ENCODE measurements at regions of chr11 and their contacts with region 1.

Region 1: GRCh38 chr11:95108159-95108611 is 18.5 kb downstream of the ENDOD1 start:
- DNase-seq: no peak
- ATAC-seq: no peak
- H3K4me3 ChIP-seq: no peak overlapping the region
- H3K4me3 Mint-ChIP-seq: no peak overlapping the region
- H3K27ac ChIP-seq: no peak overlapping the region
- H3K27ac Mint-ChIP-seq: no peak overlapping the region
- H3K4me1 ChIP-seq: no peaks in the 10 kb centered on the region
- H3K4me1 Mint-ChIP-seq: peaks cover 6% of the 10 kb centered on the region
- H3K27me3 ChIP-seq: no peaks in the 10 kb centered on the region
- H3K27me3 Mint-ChIP-seq: no peaks in the 10 kb centered on the region
- CTCF ChIP-seq: no peak

Region 2: DNA sequence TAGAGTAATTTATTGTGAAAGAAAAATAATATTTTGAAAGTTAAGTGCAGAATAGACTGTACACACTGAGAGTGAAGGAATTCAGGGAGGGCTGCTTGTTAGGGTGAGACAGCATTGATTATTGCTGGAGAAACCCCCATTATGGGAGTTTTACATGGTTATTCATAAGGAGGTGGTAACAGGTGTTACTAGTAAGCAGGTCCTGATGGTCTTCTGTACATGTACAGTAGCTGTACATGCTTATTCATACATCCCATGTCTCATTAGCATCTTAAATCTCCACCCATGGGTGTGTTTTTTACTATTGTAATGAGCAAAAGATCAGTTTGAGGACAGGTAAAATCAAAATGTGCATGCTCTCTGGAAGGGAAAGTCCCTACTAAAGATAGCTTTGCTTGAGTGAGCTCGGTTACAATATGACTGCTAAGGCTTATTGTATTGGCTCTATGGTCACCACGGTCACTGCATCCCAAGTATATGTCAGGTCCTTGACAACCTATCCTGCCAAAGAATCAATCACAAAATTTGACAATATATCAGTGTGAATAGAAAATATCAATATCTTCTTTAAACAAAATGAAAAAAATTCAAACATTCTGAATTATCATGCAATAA is 52.8 kb before region 1 on chr11:
- CTCF ChIA-PET with region 1: no interaction called
- POLR2A ChIA-PET with region 1: no interaction called
- intact Hi-C with region 1: loop called in 1 of 2 experiments (anchors 10 kb)
- DNase-seq: no peak
- ATAC-seq: no peak
- H3K4me3 ChIP-seq: no peak overlapping the region
- H3K4me3 Mint-ChIP-seq: no peak overlapping the region
- H3K27ac ChIP-seq: no peak overlapping the region
- H3K27ac Mint-ChIP-seq: no peak overlapping the region
- H3K4me1 ChIP-seq: no peaks in the 10 kb centered on the region
- H3K4me1 Mint-ChIP-seq: no peaks in the 10 kb centered on the region
- H3K27me3 ChIP-seq: peaks cover 14 to 16% of the 10 kb centered on the region in 2 experiments
- H3K27me3 Mint-ChIP-seq: peaks cover 68% of the 10 kb centered on the region
- CTCF ChIP-seq: no peak

Measured in CD4-positive, alpha-beta T cell (primary cell).